ENCODE measurements at regions of chr12 and their contacts with region 1.

Region 1: DNA sequence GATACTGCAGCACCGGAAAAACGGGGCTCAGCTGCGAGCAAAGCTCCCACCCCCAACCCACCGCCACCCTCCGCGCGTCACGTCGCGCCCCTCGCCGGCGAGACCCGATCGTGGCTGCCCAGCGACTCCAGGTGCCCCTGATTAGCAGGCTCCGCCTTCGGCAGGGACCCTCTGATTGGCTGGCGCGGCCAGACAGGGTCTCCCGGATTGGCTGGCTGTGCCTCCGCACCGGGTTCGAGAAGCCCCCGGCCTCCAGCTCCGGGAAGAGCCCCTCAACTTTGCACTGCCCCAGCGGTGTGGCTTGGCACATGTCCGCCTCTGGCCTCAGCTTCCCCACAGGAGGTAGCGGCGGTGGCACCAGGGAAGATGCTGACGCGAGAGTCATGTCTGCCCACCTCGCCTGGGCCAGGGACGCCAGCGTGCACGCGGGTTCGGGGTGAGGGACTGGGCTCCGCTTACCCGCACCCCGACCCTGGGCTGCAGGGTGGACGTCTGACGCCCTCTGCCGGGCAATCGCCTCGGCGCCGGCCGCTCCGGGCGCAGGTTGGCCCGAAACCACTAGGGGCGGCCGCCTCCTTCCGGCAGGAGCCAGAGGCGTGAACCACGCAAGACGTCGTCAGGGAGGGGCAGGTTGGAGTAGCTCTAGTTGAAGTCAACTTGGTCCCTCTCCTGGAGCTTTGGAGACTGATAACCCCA is 498 bp upstream of the RHOF start:
- DNase-seq: peak; percentile 77
- H3K4me3 ChIP-seq: peak overlapping the region; percentile 65
- H3K27ac ChIP-seq: peak overlapping the region; percentile 89
- H3K27me3 ChIP-seq: no peaks in the 10 kb centered on the region
- CTCF ChIP-seq: peak; percentile 100

Region 2: GRCh38 chr12:121697098-121697698 is 96.8 kb before region 1 on chr12:
- CTCF ChIA-PET with region 1: interaction called, 64 read pairs
- POLR2A ChIA-PET with region 1: interaction called, 7 read pairs
- DNase-seq: no peak
- H3K4me3 ChIP-seq: no peak overlapping the region
- H3K27ac ChIP-seq: no peak overlapping the region
- H3K27me3 ChIP-seq: peaks cover 2% of the 10 kb centered on the region
- CTCF ChIP-seq: peak; percentile 47

Region 3: DNA sequence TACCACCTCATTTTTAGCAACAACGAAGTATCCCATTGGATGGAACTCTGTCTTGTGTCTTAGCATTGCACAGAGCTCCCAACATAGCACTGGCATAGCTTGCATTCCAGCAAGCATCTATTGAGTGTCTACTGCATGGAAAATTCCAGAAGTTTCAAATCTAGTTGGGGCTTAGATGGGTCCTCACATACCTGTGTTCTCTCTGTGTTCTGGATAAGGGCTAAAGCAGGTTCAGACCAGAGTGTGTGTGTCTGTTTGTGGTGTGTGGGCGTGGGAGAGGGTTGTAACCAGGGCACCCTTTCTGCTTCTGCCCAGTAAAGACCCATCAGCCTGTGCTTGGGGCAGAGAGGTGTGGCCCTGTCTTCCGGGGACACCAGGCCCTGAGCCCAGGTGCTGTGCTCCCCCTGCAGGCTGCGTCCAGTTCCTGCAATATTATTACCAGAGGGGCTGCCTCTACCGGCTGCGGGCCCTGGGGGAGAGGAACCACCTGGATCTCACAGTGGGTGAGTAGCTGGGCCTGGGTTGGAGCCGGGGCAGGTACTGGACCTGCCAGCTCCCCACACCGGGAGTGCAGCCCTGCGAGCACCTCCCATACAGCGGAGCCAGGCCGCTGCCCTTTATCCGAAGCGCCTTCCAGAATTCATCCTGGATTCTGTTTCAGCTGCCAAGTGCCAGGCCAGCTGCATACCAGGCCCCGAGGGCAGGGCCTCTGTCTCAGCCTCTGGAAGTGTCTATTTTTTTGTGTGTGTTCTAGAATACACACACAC is 20.8 kb before region 1 on chr12:
- CTCF ChIA-PET with region 1: interaction called, 54 read pairs
- POLR2A ChIA-PET with region 1: interaction called, 3 read pairs
- DNase-seq: no peak
- H3K4me3 ChIP-seq: no peak overlapping the region
- H3K27ac ChIP-seq: no peak overlapping the region
- H3K27me3 ChIP-seq: no peaks in the 10 kb centered on the region
- CTCF ChIP-seq: peak; percentile 89

Region 4: DNA sequence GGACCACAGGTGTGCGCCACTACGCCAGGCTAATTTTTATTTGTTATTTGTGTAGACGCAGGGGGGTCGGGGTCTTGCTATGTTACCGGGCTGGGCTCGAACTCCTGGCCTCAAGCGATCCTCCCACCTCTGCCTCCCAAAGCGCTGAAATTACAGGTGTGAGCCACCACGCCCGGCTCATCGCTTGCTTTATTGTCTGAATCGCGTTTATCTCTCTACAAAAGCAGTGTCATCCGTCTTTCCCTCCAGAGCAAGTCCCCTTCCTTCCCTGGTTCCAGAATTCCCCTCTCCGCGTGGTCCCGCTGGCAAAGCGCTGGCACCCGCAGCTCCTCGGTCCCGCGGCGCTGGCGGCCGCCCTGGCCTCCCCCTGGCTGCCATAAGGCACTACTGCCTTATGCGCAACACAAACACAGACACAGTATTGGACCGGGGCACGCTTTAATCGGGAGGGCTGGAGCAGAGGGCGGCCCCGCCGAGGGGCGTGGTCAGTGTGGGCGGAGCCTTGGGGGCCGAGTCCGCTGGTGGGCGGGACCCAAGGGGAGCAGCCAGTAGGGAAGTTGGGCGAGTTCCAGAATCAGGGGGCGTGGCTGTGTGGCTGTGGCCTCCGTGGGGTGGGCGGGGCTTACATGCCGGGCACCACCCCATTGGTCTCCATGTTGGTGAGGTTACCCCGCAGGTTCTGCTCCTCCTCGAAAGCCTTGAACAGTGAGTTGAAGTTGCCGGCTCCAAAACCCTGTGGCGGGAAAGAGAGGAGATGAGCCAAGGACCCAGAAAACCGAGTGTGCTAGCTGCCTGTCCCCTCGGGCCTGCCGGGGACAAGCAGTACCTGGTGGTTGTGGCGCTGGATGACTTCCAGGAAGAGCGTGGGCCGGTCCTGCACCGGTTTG is 45.4 kb after region 1 on chr12:
- CTCF ChIA-PET with region 1: interaction called, 38 read pairs
- POLR2A ChIA-PET with region 1: no interaction called
- DNase-seq: peak; percentile 95
- H3K4me3 ChIP-seq: peak overlapping the region; percentile 75
- H3K27ac ChIP-seq: no peak overlapping the region
- H3K27me3 ChIP-seq: no peaks in the 10 kb centered on the region
- CTCF ChIP-seq: peak; percentile 57

Region 5: DNA sequence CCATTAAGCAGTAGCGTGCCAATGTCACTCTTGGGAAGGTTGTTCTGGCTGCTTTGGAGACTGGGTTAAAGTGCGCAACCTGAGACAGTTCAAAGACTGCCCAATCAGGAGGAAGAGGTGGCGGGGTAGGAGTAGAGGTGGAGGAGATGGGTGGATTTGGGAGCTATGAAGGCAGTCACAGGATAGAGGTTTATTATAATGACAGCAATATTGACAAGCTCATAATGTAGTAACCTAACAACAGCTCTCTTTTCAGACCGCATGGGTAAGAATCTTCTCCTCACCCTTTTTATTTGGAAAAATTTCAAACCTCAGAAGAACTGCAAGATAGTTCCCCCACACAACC is 89.3 kb after region 1 on chr12:
- CTCF ChIA-PET with region 1: interaction called, 111 read pairs
- POLR2A ChIA-PET with region 1: interaction called, 11 read pairs
- DNase-seq: no peak
- H3K4me3 ChIP-seq: no peak overlapping the region
- H3K27ac ChIP-seq: no peak overlapping the region
- H3K27me3 ChIP-seq: no peaks in the 10 kb centered on the region
- CTCF ChIP-seq: no peak

Region 6: GRCh38 chr12:122021822-122022526 is 228.0 kb after region 1 on chr12 and contains the start of gene BCL7A:
- CTCF ChIA-PET with region 1: interaction called, 3 read pairs
- POLR2A ChIA-PET with region 1: interaction called, 11 read pairs
- DNase-seq: peak; percentile 33
- H3K4me3 ChIP-seq: peak within 1 kb of the TSS; percentile 62
- H3K27ac ChIP-seq: peak within 1 kb of the TSS; percentile 21
- H3K27me3 ChIP-seq: no peaks in the 10 kb centered on the region
- CTCF ChIP-seq: no peak
- polyA plus RNA-seq, gene BCL7A: 4.4 and 4.6 TPM in 2 replicates

Region 7: GRCh38 chr12:122174155-122174845 is 380.3 kb after region 1 on chr12 and contains the start of gene IL31:
- CTCF ChIA-PET with region 1: no interaction called
- POLR2A ChIA-PET with region 1: no interaction called
- DNase-seq: no peak
- H3K4me3 ChIP-seq: no peak within 1 kb of the TSS
- H3K27ac ChIP-seq: no peak within 1 kb of the TSS
- H3K27me3 ChIP-seq: peaks cover 8% of the 10 kb centered on the region
- CTCF ChIP-seq: no peak
- polyA plus RNA-seq, gene IL31: not detected in 2 replicates

Region 8: DNA sequence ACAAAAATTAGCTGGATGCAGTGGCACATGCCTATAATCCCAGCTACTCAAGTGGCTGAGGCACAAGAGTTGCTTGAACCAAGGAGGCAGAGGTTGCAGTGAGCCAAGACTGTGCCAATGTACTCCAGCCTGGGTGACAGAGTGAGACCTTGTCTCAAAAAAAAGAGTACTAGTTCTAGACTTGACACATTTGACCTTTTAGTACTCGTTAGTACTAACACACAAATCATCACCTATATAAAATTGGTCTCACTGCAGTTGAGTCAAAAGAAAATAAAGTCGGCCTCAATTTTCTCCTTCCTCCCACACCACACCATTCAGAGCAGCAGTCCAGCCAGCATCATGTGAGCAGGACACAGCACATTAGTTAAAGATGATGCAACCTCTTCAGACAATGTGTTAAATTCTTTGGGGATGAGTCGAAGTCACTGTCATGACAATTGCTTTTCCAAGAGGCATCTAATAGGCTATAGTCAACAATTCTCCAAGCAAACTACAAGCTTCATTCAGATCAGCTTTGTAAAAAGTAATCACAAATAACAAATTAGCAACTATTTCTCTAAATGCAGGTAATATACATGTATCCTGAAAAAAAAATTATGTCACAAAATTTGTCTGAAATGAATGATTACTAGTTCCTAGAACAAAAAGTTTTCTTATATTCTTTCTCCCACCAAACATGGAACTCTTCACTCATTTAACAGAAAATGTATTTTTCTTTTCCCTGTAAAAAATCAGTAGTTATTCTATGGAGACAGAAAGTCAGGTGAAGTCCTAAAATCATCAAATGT is 572.9 kb after region 1 on chr12:
- CTCF ChIA-PET with region 1: no interaction called
- POLR2A ChIA-PET with region 1: no interaction called
- DNase-seq: peak; percentile 67
- H3K4me3 ChIP-seq: no peak overlapping the region
- H3K27ac ChIP-seq: peak overlapping the region; percentile 83
- H3K27me3 ChIP-seq: no peaks in the 10 kb centered on the region
- CTCF ChIP-seq: no peak